ENCODE measurements at regions of chr16 and their contacts with region 1.

Region 1: GRCh38 chr16:30526823-30527635 is 663 bp upstream of the ZNF768 start:
- DNase-seq: peak; percentile 100
- ATAC-seq: peak; percentile 94

Region 2: GRCh38 chr16:30445408-30446202 is 81.4 kb before region 1 on chr16 and contains the start of gene SEPHS2:
- intact Hi-C with region 1: loop called (anchors 5 kb)
- DNase-seq: peak; percentile 99
- ATAC-seq: peak; percentile 98
- total RNA-seq, gene SEPHS2: 29.3 TPM

Region 3: GRCh38 chr16:30458561-30459394 is 68.3 kb before region 1 on chr16:
- intact Hi-C with region 1: no loop called
- DNase-seq: peak; percentile 73
- ATAC-seq: peak; percentile 44

Region 4: DNA sequence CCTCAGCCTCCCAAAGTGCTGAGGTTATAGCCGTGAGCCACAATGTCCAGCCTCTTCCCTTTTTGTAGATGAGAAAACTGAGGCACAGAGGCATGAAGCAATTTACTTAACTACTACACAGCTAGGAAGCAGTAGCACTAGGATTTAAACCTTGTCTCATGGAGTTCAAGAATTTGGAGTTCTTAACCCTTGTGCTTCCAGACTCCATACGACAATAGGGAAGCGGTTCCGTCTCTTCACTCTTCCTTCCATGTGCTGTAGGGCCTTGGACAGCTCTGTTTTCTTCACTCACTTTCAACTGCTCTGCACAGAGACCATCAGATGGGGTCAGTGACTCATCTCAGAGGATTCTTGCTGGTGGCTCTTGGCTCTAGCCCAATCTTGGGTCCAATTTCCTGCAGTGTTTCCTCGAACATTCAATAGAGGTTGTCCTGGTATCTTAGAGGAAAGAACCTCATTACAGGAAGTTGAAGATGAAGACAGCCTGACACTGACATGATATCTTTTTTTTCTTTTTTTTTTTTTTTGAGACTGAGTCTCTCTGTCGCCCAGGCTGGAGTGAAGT is 35.2 kb before region 1 on chr16:
- intact Hi-C with region 1: no loop called
- DNase-seq: no peak
- ATAC-seq: peak; percentile 48

Region 5: GRCh38 chr16:30650369-30651123 is 123.5 kb after region 1 on chr16 and contains the start of gene PRR14:
- intact Hi-C with region 1: loop called (anchors 1 kb)
- DNase-seq: peak; percentile 100
- ATAC-seq: peak; percentile 94
- total RNA-seq, gene PRR14: 18.2 TPM